Psoas muscle (tissue), 8 donors: ENCODE measurements at regions of chr12 and their contacts with region 1.

Region 1: DNA sequence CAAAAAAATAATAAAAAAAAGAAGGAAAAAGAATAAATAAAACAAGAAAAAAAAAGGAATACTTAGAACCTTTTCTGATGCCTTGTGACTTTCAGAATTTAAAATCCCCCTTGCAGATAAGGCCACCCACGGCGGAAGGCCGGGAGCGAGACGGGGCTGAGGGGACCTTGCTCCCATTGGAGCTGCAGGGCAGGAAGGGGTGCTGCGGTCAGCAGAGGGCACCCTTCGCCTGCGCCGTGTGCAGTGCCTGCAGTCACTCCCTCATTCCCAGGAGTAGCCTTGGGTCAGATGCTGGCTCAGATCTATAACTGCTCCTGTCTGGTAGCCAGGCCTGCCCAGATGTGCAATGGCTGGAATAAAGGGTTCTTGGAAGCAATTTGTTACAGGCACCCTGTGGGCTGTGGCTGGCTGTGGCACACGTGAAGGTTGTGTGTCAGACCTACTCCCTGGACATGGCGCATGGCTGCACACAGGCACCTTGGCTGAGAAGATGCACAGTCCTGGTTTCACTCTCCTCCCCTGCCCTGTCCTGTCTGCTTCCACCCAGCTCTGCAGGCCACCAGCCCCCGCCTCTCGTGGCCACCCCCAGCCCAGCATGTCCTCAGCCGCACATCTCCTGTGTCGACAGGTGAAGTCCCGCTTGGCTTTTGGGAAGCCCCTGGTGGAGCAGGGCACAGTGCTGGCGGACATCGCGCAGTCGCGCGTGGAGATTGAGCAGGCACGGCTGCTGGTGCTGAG is 13.4 kb upstream of the ALDH2 start:
- DNase-seq: peak; percentile 68 to 83
- ATAC-seq: peak; percentile 88 to 92 (median 90)
- H3K4me3 ChIP-seq: no peak overlapping the region
- H3K27ac ChIP-seq: peak overlapping the region; percentile 19
- H3K4me1 ChIP-seq: peaks cover 25% of the 10 kb centered on the region
- H3K27me3 ChIP-seq: no peaks in the 10 kb centered on the region
- CTCF ChIP-seq: peak; percentile 89

Region 2: DNA sequence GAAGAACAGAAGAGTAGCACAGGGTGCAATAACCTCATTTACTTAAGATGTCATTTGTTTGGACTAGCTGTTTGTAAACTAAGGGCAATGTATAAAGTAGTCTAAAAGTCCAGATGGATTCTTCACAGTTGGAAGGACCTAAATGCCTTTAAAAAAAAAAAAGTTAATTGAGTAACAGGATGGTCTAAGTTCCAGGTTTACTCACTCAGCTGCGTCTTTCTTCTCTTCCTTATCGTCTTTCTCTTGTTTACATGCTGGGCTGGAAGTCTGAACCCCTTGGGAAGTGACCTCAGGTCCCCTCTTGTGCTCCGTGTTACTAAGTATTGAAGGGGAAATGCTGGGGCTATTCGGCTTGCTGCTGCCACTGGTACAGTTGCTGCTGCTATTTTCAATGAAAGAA is 265.0 kb before region 1 on chr12:
- intact Hi-C with region 1: no loop called
- DNase-seq: peak; percentile 27 to 64
- ATAC-seq: peak in 1 of 4 donors; percentile 41
- H3K4me3 ChIP-seq: no peak overlapping the region
- H3K27ac ChIP-seq: no peak overlapping the region
- H3K4me1 ChIP-seq: peaks cover 15% of the 10 kb centered on the region
- H3K27me3 ChIP-seq: no peaks in the 10 kb centered on the region
- CTCF ChIP-seq: no peak

Region 3: GRCh38 chr12:111715279-111715678 is 38.0 kb before region 1 on chr12:
- intact Hi-C with region 1: no loop called
- DNase-seq: peak; percentile 17 to 72
- ATAC-seq: peak; percentile 77 to 91 (median 88)
- H3K4me3 ChIP-seq: no peak overlapping the region
- H3K27ac ChIP-seq: peak overlapping the region; percentile 68
- H3K4me1 ChIP-seq: peaks cover 4% of the 10 kb centered on the region
- H3K27me3 ChIP-seq: no peaks in the 10 kb centered on the region
- CTCF ChIP-seq: no peak

Region 4: GRCh38 chr12:111788178-111788654 is 34.9 kb after region 1 on chr12:
- intact Hi-C with region 1: loop called (anchors 1 to 5 kb)
- DNase-seq: peak; percentile 65 to 82
- ATAC-seq: peak; percentile 73 to 88 (median 86)
- H3K4me3 ChIP-seq: no peak overlapping the region
- H3K27ac ChIP-seq: peak overlapping the region; percentile 21
- H3K4me1 ChIP-seq: peaks cover 9% of the 10 kb centered on the region
- H3K27me3 ChIP-seq: no peaks in the 10 kb centered on the region
- CTCF ChIP-seq: peak; percentile 50

Region 5: GRCh38 chr12:111812881-111813741 is 59.8 kb after region 1 on chr12:
- intact Hi-C with region 1: loop called (anchors 1 to 2 kb)
- DNase-seq: peak; percentile 71 to 81
- ATAC-seq: peak; percentile 82 to 97 (median 96)
- H3K4me3 ChIP-seq: no peak overlapping the region
- H3K27ac ChIP-seq: peak overlapping the region; percentile 21
- H3K4me1 ChIP-seq: peaks cover 7% of the 10 kb centered on the region
- H3K27me3 ChIP-seq: no peaks in the 10 kb centered on the region
- CTCF ChIP-seq: peak; percentile 77